HEK293 (cell line): ENCODE measurements at regions of chr12 and their contacts with region 1.

Region 1: DNA sequence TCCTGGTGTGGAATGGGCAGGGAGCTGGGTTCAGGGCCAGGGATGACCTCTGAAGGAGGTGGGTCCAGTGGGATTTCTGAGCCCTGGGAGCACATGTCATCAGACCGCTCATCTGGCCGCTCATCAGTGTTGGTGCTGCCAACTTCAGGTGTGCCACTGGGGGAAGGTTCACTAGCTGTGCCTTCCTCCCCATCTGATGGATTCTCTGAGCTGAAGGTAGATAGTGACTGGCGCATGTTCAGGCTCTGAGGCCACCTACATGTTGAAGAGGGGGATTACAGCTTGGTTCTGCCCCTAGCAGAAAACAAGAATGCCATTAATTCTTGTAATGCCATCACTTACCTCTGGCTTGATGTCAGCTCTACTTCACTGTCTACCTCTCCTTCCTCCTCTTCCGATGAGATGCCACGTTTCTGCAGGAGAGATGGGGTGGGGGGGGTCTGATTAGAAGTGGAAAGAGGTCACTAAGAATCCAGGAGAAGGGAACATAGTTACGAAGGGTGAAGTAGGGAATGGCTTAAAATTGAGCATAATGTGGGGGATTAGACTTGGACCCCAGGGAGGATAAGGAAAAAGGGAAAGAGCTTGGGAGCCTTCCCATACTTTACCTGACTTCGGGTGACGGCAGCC is 17.2 kb downstream of the MAP3K12 start:
- H3K4me3 ChIP-seq: no peak overlapping the region
- H3K27ac ChIP-seq: no peak overlapping the region
- H3K4me1 ChIP-seq: no peaks in the 10 kb centered on the region
- CTCF ChIP-seq: no peak

Region 2: DNA sequence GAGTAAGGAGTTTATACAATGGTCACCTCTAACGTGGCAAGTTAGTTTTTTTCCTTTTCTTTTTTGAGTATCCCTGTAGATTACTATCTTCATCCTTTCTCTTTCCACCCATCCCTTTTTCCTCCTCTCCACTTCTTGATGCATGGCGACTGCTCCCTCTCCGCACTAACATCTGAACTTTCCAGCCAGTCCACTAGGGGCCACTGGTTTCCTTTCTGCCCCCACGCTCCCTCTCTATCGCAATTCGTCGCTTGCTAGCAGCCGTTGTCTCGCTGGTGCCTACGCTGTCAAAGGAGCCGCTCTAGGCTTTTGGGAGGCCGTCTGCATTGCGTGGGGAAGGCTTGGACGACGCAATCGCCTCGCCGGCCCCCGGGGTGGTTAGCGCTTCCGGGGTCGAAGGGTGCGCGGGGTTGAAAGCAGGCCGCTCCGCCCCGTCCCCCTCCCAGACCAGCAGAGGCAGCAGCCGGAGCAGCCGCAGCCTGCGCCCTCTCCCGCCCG is 30.4 kb before region 1 on chr12 and contains the start of gene PCBP2:
- CTCF ChIA-PET with region 1: interaction called, 5 read pairs
- POLR2A ChIA-PET with region 1: interaction called, 10 read pairs
- H3K4me3 ChIP-seq: peak within 1 kb of the TSS; percentile 99
- H3K27ac ChIP-seq: peak within 1 kb of the TSS; percentile 98
- H3K4me1 ChIP-seq: peaks cover 3% of the 10 kb centered on the region
- CTCF ChIP-seq: peak; percentile 99

Region 3: DNA sequence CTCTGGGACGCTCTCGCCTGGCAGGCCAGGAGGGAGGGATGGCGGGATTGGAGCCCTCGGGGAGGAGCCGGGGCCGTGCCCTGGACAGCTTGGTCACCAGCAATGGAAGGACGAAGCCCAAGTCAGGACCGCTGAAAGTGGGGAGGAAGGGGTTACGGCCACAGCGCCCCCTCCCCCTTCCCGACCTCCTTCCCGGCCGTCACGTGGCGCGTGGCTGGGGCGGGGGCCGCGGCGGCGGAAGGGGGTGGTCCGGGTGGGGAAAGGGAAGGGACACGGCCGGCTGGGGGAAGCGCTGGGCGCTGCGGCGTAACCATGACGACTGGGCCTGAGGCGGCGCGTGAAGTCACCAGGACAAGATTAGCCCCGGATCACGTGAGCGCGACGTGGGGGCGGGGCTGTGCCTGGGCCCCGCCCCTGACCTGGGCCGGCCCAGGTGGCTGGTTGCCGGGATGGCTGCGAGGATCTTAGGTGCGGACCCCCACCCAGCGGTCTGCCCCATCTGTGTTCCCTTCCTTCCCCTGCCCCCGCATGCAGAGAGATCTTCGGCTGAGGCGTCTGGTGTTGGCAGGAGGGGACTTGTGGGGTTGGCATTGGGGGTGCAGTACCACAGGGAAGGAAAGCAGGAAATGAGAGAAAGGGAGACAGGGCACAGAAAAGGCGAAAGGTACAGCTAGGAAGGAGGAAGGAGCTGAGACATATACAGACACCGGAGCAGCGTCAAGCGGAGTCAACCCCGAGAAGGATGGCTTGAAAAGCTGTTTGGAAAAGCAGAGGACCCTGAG is 10.9 kb after region 1 on chr12:
- CTCF ChIA-PET with region 1: interaction called, 3 read pairs
- POLR2A ChIA-PET with region 1: interaction called, 39 read pairs
- H3K4me3 ChIP-seq: peak overlapping the region; percentile 55
- H3K27ac ChIP-seq: peak overlapping the region; percentile 46; the same call in 1 of the 2 replicates
- H3K4me1 ChIP-seq: peaks cover 16% of the 10 kb centered on the region
- CTCF ChIP-seq: 0 out of 2 replicates have a peak, but pooled peaks have one; percentile 13

Region 4: DNA sequence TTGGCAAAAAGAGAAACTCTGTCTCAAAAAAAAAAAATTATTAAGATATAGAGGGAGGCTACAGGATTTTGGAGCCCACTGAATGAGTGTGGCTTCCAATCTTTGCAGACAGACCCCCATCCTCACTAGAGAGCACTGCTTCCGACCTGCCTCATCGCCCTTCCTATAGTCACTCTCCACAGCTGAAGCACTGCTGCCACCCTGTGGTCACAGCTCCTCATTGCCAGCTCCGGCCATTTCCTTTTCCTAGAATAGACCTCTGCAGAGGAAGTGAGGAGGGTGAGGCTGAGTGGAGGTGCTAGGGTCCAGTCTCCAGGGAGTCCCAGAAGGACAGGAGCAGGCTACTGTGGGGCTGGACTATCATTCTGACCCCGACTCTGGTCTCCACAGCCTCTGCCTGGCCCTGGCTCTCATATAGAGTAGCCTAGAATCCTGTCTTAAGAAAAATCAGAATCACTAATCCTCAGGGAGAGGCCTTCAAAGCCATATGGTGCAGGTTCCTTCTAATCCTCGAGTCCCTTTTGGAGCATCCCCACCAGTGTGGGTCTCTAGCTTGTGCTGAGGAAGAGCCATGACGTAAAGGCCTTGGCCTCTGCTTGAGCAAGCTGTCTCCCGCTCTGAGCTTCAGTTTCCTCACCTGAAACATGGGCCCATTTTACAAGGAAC is 26.6 kb after region 1 on chr12:
- CTCF ChIA-PET with region 1: interaction called, 16 read pairs
- POLR2A ChIA-PET with region 1: interaction called, 7 read pairs
- H3K4me3 ChIP-seq: no peak overlapping the region
- H3K27ac ChIP-seq: no peak overlapping the region
- H3K4me1 ChIP-seq: no peaks in the 10 kb centered on the region
- CTCF ChIP-seq: peak; percentile 91